ENCODE measurements at regions of chr1 and their contacts with region 1.

Region 1: DNA sequence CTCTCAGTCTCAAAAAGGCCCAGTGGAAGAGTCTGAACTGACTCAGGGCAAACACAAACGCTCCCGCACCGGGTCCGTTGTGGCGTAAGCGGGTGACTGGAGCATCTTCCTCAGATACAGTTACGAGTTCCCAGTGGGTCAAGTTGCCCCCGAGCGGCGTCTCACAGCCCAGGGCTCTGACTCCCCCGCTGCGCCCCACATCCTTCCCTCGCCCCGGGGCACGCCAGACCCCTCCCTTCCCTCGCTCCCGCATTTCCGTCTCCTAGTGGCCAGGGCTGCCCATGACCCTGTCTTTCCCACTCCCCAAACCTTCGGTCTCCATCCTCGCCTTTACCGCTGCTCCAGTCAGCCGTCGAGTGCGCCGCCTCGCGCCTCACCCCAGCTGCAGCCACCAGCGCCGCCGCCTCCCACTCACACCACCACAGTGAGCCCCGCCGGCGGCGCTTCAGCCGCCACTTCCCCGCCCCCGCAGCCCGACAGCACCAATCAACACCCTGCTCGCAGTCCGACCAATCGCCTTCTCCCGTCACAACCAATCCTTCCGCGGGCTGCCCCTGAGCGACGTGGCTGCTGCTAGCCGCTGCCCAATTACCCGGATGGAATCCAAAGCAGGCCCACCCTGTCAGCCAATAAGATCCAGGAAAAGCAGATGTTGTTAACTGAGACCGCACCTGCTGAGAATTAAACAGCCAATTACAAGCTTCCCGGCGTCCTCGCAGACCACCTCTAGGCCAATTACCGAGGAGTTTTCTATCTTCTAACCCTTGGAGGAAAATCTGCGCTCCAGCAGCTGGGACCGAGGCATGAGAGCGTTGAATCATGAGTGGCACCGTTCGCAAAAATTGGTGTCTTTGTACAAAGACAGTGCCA is at the start of gene TDRKH:
- DNase-seq: peak; percentile 100
- H3K4me3 ChIP-seq: peak within 1 kb of the TSS; percentile 43 to 94 (median 88)
- H3K27ac ChIP-seq: no peak within 1 kb of the TSS
- H3K4me1 ChIP-seq: peaks cover 12% of the 10 kb centered on the region
- H3K27me3 ChIP-seq: peaks cover 0 to 1% of the 10 kb centered on the region in 2 experiments
- CTCF ChIP-seq: peak in 1 of 2 donors; percentile 39
- POLR2A ChIP-seq: peak; percentile 17
- total RNA-seq, gene TDRKH: 9.3 and 9.6 TPM in 2 replicates

Region 2: GRCh38 chr1:151013518-151013917 is 776.8 kb before region 1 on chr1:
- CTCF ChIA-PET with region 1: no interaction called
- POLR2A ChIA-PET with region 1: no interaction called
- dilution Hi-C with region 1: no loop called
- intact Hi-C with region 1: no loop called
- DNase-seq: peak; percentile 13
- H3K4me3 ChIP-seq: no peak overlapping the region
- H3K27ac ChIP-seq: no peak overlapping the region
- H3K4me1 ChIP-seq: peaks cover 7% of the 10 kb centered on the region
- H3K27me3 ChIP-seq: no peaks in the 10 kb centered on the region
- CTCF ChIP-seq: no peak
- POLR2A ChIP-seq: no peak

Region 3: DNA sequence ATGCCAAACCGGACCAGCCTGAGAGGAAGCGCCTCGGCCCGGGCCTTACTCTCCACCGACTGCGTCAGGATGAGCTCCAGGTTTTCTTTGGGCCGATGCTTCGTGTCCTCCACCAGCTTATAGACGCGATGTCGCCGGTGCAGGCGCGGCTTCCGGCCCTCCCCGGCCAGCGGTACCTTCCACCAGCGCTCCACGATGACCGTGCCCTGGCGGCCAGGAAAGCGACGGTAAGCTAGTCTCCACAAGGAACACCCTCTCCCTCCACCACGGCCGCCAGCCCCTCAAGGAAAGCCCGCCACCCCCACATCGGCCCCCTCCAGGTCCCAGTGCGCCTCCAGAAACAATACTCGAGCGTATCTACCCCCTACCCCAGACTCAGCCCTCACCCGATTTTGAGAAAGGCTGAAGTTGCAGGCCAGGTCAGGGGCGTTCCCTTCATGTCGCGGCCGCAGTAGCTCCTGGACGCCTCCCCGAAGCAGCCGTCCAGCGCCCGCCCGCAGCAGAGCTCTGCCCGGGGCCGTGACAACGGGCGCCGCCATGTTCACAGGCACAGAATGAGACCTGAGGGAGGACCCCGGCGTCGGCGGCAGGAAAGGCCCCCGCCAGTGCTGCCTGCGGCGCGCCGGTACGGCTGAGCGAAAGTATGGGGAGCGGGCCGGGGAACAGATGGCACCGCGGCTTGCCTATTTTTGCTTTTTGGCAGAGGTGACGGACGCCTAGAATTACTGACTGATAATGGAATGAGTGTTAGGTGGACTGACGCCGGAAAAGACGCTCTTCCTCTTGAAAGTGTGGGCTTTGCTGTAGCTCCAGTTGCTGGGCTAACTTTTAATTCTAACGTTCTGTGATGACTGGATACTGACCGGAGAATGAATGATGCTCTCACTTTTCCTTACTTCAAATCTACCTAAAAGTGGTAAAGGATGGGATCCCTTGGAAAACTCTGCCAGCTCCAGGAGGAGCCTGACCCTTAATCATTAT is 27.1 kb before region 1 on chr1 and contains the start of gene MRPL9:
- CTCF ChIA-PET with region 1: no interaction called
- POLR2A ChIA-PET with region 1: interaction called, 4 read pairs
- dilution Hi-C with region 1: no loop called
- intact Hi-C with region 1: loop called (anchors 1 kb)
- DNase-seq: peak; percentile 81
- H3K4me3 ChIP-seq: peak within 1 kb of the TSS; percentile 86 to 97 (median 88)
- H3K27ac ChIP-seq: peak within 1 kb of the TSS; percentile 91
- H3K4me1 ChIP-seq: peaks cover 16% of the 10 kb centered on the region
- H3K27me3 ChIP-seq: no peaks in the 10 kb centered on the region
- CTCF ChIP-seq: no peak
- POLR2A ChIP-seq: peak; percentile 56
- total RNA-seq, gene MRPL9: 96.9 and 112 TPM in 2 replicates

Region 4: DNA sequence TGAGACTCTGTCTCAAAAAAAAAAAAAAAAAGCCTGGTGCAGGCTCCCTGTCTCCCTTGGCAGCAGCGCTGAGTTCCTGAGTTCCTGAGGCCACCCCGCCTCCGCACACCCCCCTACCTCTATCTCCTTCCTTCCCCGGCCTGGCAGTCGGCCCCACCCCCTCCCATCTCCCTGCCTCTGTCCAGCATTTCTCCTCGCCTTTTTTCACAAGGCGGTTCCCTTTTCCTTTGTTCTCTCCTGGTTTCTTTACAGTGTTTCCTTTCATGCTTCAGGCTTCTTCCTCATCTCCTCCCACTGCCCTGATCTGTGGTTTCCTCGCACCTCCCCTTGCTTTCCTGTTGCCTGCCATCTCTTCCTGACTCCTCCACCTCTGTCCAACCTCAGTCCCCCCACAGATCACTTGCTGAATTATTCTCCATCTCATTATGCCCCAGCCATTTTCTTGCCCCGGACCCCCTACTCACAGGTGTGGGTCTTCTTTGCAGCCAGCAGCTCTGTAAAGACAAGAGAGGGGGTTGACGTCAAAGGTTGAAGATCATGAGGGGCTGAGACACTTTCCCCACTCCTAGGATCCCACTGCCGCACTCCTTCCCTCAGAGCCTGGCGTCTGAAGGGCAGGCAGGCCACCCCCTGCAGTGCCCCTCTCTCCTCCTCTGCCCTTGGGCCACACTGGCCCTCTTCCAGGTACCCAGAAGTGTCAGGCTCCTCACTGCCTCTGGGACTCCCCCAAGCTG is 38.8 kb after region 1 on chr1:
- CTCF ChIA-PET with region 1: no interaction called
- POLR2A ChIA-PET with region 1: no interaction called
- dilution Hi-C with region 1: no loop called
- intact Hi-C with region 1: loop called (anchors 1 kb)
- DNase-seq: peak; percentile 60
- H3K4me3 ChIP-seq: no peak overlapping the region
- H3K27ac ChIP-seq: no peak overlapping the region
- H3K4me1 ChIP-seq: peaks cover 11% of the 10 kb centered on the region
- H3K27me3 ChIP-seq: no peaks in the 10 kb centered on the region
- CTCF ChIP-seq: no peak
- POLR2A ChIP-seq: no peak

Region 5: DNA sequence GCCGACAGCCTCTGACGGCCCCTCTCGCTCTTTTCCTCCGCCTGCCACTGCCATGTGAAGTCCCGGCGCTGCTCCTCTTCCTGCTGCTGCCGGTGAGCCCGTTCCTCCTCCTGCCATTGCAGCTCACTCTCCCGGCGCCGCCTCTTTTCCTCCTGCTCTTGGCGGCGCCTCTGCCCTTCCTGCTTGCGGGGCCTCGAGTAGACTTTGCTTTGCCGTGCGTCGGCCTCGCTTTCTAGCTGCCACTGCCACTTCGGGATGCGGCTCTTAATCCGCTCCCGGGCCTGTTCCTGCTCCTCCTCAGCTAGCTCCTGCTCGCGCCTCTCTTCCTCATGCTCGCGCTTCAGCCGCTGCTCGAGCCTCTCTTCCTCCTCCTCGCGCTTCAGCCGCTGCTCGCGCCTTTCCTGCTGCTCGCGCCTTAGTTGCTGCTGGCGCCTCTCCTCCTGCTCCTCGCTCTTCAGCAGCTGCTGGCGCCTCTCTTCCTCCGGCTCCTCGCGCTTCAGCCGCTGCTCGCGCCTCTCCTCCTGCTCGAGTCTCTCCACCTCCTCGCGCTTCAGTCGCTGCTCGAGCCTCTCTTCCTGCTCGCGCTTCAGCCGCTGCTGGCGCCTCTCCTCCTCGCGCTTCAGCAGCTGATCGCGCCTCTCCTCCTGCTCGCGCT is 320.7 kb after region 1 on chr1:
- CTCF ChIA-PET with region 1: no interaction called
- POLR2A ChIA-PET with region 1: no interaction called
- dilution Hi-C with region 1: no loop called
- intact Hi-C with region 1: no loop called
- DNase-seq: peak; percentile 58
- H3K4me3 ChIP-seq: peak overlapping the region; percentile 19 to 35 (median 33)
- H3K27ac ChIP-seq: no peak overlapping the region
- H3K4me1 ChIP-seq: peaks cover 33% of the 10 kb centered on the region
- H3K27me3 ChIP-seq: peaks cover 75 to 93% of the 10 kb centered on the region in 2 experiments
- CTCF ChIP-seq: no peak
- POLR2A ChIP-seq: no peak